SK-N-SH (cell line): ENCODE measurements at regions of chr11 and their contacts with region 1.

Region 1: GRCh38 chr11:86990515-86990914 is 35.3 kb upstream of the FZD4 start:
- DNase-seq: no peak
- H3K4me3 ChIP-seq: no peak overlapping the region
- H3K27ac ChIP-seq: peak overlapping the region in 1 of 2 experiments; percentile 33; a peak in 2 of 4 replicates
- H3K4me1 ChIP-seq: peaks cover 0 to 44% of the 10 kb centered on the region in 2 experiments; a peak in 1 of 4 replicates
- H3K27me3 ChIP-seq: no peaks in the 10 kb centered on the region
- CTCF ChIP-seq: no peak
- EP300 ChIP-seq: no peak
- RAD21 ChIP-seq: no peak

Region 2: DNA sequence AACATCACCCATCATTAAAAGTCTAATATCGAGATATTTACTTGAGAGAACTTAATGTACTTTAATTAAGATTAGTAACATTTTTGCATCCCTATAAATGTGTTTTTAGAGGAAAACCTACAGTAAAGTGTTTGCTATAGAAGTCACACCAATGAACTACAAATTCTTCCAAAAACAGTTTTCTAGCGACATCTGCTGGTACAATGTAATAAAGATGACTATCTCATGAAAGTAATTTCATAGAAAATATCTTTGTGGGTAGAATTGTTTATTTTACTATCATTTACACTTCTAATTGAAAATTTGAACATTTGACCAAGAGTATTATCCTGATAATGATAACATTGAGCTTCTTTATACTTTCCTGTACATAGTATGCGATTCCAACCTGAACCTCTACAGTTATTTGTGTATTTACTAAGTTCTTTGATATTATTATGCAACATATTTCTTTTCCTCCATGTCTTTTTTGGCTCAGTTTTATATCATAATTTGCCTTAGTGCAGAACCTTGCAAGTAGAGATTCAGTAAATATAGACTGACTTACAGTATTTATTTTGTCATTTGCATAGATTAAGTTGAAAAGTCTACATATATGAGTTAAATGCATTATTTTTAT is 299.9 kb after region 1 on chr11:
- CTCF ChIA-PET with region 1: interaction called, 17 read pairs
- POLR2A ChIA-PET with region 1: no interaction called
- DNase-seq: peak; percentile 50
- H3K4me3 ChIP-seq: no peak overlapping the region; a peak in 1 of 4 replicates
- H3K27ac ChIP-seq: no peak overlapping the region
- H3K4me1 ChIP-seq: no peaks in the 10 kb centered on the region; a peak in 1 of 4 replicates
- H3K27me3 ChIP-seq: no peaks in the 10 kb centered on the region
- CTCF ChIP-seq: peak; percentile 81
- EP300 ChIP-seq: no peak
- RAD21 ChIP-seq: peak; percentile 88

Region 3: GRCh38 chr11:87300640-87301380 is 310.3 kb after region 1 on chr11:
- CTCF ChIA-PET with region 1: interaction called, 16 read pairs
- POLR2A ChIA-PET with region 1: no interaction called
- DNase-seq: no peak
- H3K4me3 ChIP-seq: no peak overlapping the region
- H3K27ac ChIP-seq: no peak overlapping the region
- H3K4me1 ChIP-seq: peaks cover 0 to 3% of the 10 kb centered on the region in 2 experiments; a peak in 3 of 4 replicates
- H3K27me3 ChIP-seq: no peaks in the 10 kb centered on the region
- CTCF ChIP-seq: no peak
- EP300 ChIP-seq: no peak
- RAD21 ChIP-seq: no peak